MCF 10A (cell line): ENCODE measurements at regions of chr7 and their contacts with region 1.

Region 1: DNA sequence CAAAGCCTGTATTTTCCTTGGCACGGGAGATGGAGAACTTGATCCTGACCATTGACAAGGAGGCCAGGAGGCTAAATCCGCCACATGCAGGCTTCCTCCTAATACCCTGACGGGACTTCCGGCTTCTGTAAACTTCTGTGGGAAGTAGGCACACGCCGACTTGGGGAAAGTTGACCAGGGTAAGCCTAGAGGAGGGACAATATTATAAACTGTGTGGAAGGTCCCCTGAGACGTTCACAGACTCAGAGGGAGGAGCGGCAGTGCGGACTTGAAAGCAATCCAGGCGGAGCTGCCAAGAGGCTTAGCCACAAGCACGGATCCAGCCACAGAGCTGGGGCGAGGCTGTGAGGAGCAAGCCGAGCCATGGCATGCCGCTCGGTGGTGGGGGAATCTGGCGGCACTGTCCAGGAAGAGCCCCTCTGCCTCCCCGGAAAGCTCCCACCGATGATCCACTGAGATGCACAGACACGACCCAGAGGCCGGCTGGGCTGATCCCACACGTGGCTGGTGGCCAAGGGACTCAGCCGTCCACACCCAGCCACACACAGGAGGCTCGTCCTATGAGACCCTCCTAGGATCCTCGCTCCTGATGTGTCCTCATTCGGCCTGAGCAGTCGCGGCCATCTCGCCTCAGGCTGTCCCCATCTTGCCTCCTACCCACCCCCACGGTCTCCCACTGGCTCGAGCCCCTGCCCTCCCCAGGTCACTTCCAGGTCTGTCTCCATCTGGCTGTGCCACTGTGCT is 40.0 kb upstream of the INSIG1 start:
- DNase-seq: peak; percentile 91
- H3K4me3 Mint-ChIP-seq: peak overlapping the region; percentile 64
- H3K27ac Mint-ChIP-seq: peak overlapping the region; percentile 92
- H3K4me1 Mint-ChIP-seq: peaks cover 16% of the 10 kb centered on the region
- H3K27me3 Mint-ChIP-seq: no peaks in the 10 kb centered on the region
- CTCF ChIP-seq: no peak

Region 2: GRCh38 chr7:155069992-155070751 is 187.5 kb before region 1 on chr7 and contains the start of gene HTR5A:
- CTCF ChIA-PET with region 1: no interaction called
- POLR2A ChIA-PET with region 1: no interaction called
- intact Hi-C with region 1: no loop called
- DNase-seq: peak; percentile 79
- H3K4me3 Mint-ChIP-seq: no peak within 1 kb of the TSS
- H3K27ac Mint-ChIP-seq: no peak within 1 kb of the TSS
- H3K4me1 Mint-ChIP-seq: no peaks in the 10 kb centered on the region
- H3K27me3 Mint-ChIP-seq: peaks cover 31% of the 10 kb centered on the region
- CTCF ChIP-seq: no peak
- total RNA-seq, gene HTR5A: not detected in 2 replicates

Region 3: GRCh38 chr7:155190688-155191087 is 67.0 kb before region 1 on chr7:
- CTCF ChIA-PET with region 1: interaction called, 6 read pairs
- POLR2A ChIA-PET with region 1: no interaction called
- intact Hi-C with region 1: loop called (anchors 5 kb)
- DNase-seq: peak; percentile 46
- H3K4me3 Mint-ChIP-seq: no peak overlapping the region
- H3K27ac Mint-ChIP-seq: no peak overlapping the region
- H3K4me1 Mint-ChIP-seq: peaks cover 5% of the 10 kb centered on the region
- H3K27me3 Mint-ChIP-seq: no peaks in the 10 kb centered on the region
- CTCF ChIP-seq: peak; percentile 85

Region 4: GRCh38 chr7:155230168-155230593 is 27.5 kb before region 1 on chr7:
- CTCF ChIA-PET with region 1: no interaction called
- POLR2A ChIA-PET with region 1: interaction called, 16 read pairs
- intact Hi-C with region 1: no loop called
- DNase-seq: peak; percentile 95
- H3K4me3 Mint-ChIP-seq: peak overlapping the region; percentile 39
- H3K27ac Mint-ChIP-seq: peak overlapping the region; percentile 87
- H3K4me1 Mint-ChIP-seq: peaks cover 14% of the 10 kb centered on the region
- H3K27me3 Mint-ChIP-seq: no peaks in the 10 kb centered on the region
- CTCF ChIP-seq: no peak